ENCODE measurements at regions of chr20 and their contacts with region 1.

Region 1: DNA sequence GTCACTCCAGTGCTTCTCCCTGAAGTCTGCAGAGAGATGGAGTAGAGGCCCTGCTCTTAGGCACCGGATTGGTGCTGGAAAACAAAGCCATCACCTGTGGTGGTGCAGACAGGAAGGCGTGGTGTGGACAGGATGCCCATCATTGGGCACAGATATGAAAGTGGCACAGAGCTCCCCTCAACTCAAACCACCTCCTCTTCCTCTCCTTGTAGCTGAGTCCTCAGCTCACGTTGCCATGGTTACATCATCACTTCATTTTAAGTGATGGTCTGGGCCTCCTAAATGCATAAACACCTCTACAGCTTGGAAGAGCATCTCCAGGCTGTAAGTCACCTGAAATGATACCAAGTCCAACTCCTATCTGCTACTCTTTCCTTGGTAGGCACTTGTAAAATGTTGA is 8.0 kb upstream of the RTF2 start:
- DNase-seq: peak; percentile 52
- ATAC-seq: peak; percentile 92
- H3K4me3 Mint-ChIP-seq: peak overlapping the region; percentile 68
- H3K27ac Mint-ChIP-seq: peak overlapping the region; percentile 83
- H3K4me1 Mint-ChIP-seq: peaks cover 56% of the 10 kb centered on the region
- H3K27me3 Mint-ChIP-seq: no peaks in the 10 kb centered on the region

Region 2: GRCh38 chr20:56411759-56412472 is 48.5 kb before region 1 on chr20 and contains the start of gene CASS4:
- POLR2A ChIA-PET with region 1: interaction called, 18 read pairs
- DNase-seq: peak; percentile 53
- ATAC-seq: peak; percentile 79
- H3K4me3 Mint-ChIP-seq: peak within 1 kb of the TSS; percentile 95
- H3K27ac Mint-ChIP-seq: peak within 1 kb of the TSS; percentile 98
- H3K4me1 Mint-ChIP-seq: peaks cover 47% of the 10 kb centered on the region
- H3K27me3 Mint-ChIP-seq: no peaks in the 10 kb centered on the region
- total RNA-seq, gene CASS4: 14.2 to 18.7 TPM

Region 3: GRCh38 chr20:56439771-56440291 is 20.6 kb before region 1 on chr20:
- POLR2A ChIA-PET with region 1: interaction called, 10 read pairs
- DNase-seq: no peak
- ATAC-seq: peak; percentile 50
- H3K4me3 Mint-ChIP-seq: peak overlapping the region; percentile 59
- H3K27ac Mint-ChIP-seq: peak overlapping the region; percentile 87
- H3K4me1 Mint-ChIP-seq: peaks cover 45% of the 10 kb centered on the region
- H3K27me3 Mint-ChIP-seq: no peaks in the 10 kb centered on the region

Region 4: GRCh38 chr20:56483944-56484343 is 23.5 kb after region 1 on chr20:
- POLR2A ChIA-PET with region 1: no interaction called
- DNase-seq: no peak
- ATAC-seq: peak; percentile 58
- H3K4me3 Mint-ChIP-seq: peak overlapping the region; percentile 67
- H3K27ac Mint-ChIP-seq: peak overlapping the region; percentile 59
- H3K4me1 Mint-ChIP-seq: peaks cover 21% of the 10 kb centered on the region
- H3K27me3 Mint-ChIP-seq: no peaks in the 10 kb centered on the region